ENCODE measurements at regions of chr2 and their contacts with region 1.

Region 1: GRCh38 chr2:219029829-219030165 is 11.5 kb downstream of the CFAP65 start:
- DNase-seq: peak; percentile 90 to 92
- H3K4me3 ChIP-seq: no peak overlapping the region
- H3K27ac ChIP-seq: no peak overlapping the region
- H3K4me1 ChIP-seq: no peaks in the 10 kb centered on the region
- H3K27me3 ChIP-seq: peaks cover 0 to 57% (median 6%) of the 10 kb centered on the region in 3 donors
- CTCF ChIP-seq: peak in 6 of 7 experiments; percentile 85 to 98 (median 90)
- EP300 ChIP-seq: no peak
- POLR2A ChIP-seq: no peak

Region 2: GRCh38 chr2:219308142-219309093 is 278.6 kb after region 1 on chr2:
- intact Hi-C with region 1: loop called (anchors 10 kb)
- DNase-seq: peak; percentile 52 to 88
- H3K4me3 ChIP-seq: peak overlapping the region in 1 of 4 donors; percentile 9
- H3K27ac ChIP-seq: peak overlapping the region in 2 of 5 donors; percentile 17 to 37
- H3K4me1 ChIP-seq: peaks cover 0 to 16% (median 8%) of the 10 kb centered on the region in 4 donors
- H3K27me3 ChIP-seq: peaks cover 8 to 87% (median 32%) of the 10 kb centered on the region in 3 donors
- CTCF ChIP-seq: no peak
- EP300 ChIP-seq: no peak
- POLR2A ChIP-seq: no peak